GM12878 (cell line): ENCODE measurements at regions of chr14 and their contacts with region 1.

Region 1: DNA sequence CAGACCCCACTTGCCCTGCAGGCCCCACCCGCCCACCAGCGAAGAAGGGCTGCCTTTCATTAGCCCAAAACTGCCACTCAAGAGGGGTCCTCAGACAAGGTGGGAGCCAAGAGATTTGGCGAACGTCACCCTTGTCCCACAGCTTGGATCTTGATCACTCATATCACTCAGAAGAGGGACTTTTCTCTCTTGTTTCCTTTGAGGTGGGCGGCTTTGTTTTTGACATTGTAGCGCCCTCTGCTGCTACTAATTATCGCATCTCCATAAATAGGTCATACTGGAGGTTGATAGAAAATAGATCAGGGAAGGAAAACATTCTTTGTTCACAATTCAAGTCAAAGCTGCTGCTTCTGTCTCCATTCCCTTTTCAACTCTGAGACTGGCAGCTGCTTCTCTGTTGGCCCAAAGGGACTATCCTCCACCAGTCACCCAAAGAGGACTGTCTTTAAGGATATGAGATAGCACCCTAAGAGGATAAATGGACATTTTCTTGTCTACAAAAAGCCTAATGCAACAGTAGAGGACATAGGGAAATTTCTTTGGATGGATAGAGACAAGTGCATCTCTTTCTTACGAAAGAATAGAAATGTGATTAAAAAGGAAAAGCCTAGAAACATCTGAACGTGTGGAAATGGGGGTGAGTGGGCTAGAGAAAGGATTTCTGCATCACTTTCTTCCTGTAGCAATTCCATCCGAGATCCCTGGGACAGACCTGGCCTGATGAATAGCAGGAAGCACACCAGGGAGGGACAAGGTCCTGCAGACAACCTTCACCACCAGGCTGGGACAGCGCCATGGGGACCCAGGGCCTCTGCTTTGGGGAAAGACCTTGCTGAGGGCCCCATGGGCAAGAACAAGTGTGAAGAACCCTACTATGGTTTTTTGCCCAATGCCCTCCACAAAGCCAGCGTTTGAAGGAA is 115.8 kb downstream of the DAD1 start:
- DNase-seq: no peak
- ATAC-seq: peak; percentile 67
- H3K4me3 ChIP-seq: no peak overlapping the region
- H3K27ac ChIP-seq: peak overlapping the region; percentile 49
- H3K4me1 ChIP-seq: peaks cover 50% of the 10 kb centered on the region
- H3K27me3 ChIP-seq: no peaks in the 10 kb centered on the region
- CTCF ChIP-seq: peak; percentile 59 to 72 (median 72)
- EP300 ChIP-seq: no peak
- POLR2A ChIP-seq: no peak
- RAD21 ChIP-seq: peak; percentile 96

Region 2: GRCh38 chr14:22221508-22221907 is 251.7 kb before region 1 on chr14:
- CTCF ChIA-PET with region 1: interaction called, 11 read pairs
- POLR2A ChIA-PET with region 1: no interaction called
- RAD21 ChIA-PET with region 1: interaction called, 7 read pairs
- SMC1A ChIA-PET with region 1: interaction called, 10 read pairs
- in situ Hi-C with region 1: no loop called
- intact Hi-C with region 1: loop called (anchors 10 kb)
- DNase-seq: no peak
- ATAC-seq: peak; percentile 58
- H3K4me3 ChIP-seq: no peak overlapping the region
- H3K27ac ChIP-seq: no peak overlapping the region
- H3K4me1 ChIP-seq: no peaks in the 10 kb centered on the region
- H3K27me3 ChIP-seq: no peaks in the 10 kb centered on the region; a peak in 2 of 4 replicates
- CTCF ChIP-seq: peak; percentile 31 to 49 (median 43); a peak in 4 of 6 replicates
- EP300 ChIP-seq: no peak
- POLR2A ChIP-seq: no peak
- RAD21 ChIP-seq: peak; percentile 25; the same call in 1 of the 2 replicates

Region 3: GRCh38 chr14:22314181-22314820 is 158.9 kb before region 1 on chr14:
- CTCF ChIA-PET with region 1: interaction called, 165 read pairs
- POLR2A ChIA-PET with region 1: interaction called, 5 read pairs
- RAD21 ChIA-PET with region 1: interaction called, 59 read pairs
- SMC1A ChIA-PET with region 1: interaction called, 132 read pairs
- in situ Hi-C with region 1: loop called (anchors 5 kb)
- intact Hi-C with region 1: loop called (anchors 2 kb)
- DNase-seq: peak; percentile 48
- ATAC-seq: peak; percentile 98
- H3K4me3 ChIP-seq: no peak overlapping the region
- H3K27ac ChIP-seq: no peak overlapping the region
- H3K4me1 ChIP-seq: no peaks in the 10 kb centered on the region
- H3K27me3 ChIP-seq: no peaks in the 10 kb centered on the region
- CTCF ChIP-seq: peak; percentile 55 to 80 (median 69); a peak in 5 of 6 replicates
- EP300 ChIP-seq: no peak
- POLR2A ChIP-seq: no peak
- RAD21 ChIP-seq: peak; percentile 75

Region 4: DNA sequence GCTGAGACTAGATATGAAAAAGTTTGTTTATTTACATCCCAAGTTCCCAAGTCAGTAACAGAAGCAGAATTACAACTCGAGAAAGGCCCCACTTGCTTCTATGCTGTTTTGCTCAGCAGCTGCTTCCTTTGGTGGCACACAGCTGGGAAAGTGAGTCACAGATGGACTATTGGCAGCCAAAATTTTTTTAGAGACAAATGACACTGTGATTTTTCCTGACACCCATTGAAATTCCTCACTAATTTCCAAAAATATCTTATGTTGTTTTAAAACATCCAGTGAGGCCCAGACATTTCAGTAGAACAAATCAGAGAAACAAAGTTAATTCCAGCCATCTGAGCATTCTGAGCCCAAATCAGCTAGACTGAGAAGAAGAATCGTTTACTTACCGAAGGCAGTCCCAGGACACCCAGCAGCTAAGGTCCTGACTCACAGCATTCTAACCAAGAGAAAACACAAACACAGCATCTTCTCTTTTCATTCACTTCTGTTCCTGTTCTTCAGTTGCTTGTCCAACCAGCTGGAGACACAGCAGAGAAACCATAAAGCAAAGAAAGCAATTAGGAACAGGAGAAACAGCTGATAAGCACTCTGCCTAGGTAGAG is 72.4 kb before region 1 on chr14:
- CTCF ChIA-PET with region 1: interaction called, 411 read pairs
- POLR2A ChIA-PET with region 1: no interaction called
- RAD21 ChIA-PET with region 1: interaction called, 13 read pairs
- SMC1A ChIA-PET with region 1: interaction called, 912 read pairs
- in situ Hi-C with region 1: no loop called
- intact Hi-C with region 1: no loop called
- DNase-seq: no peak
- ATAC-seq: no peak
- H3K4me3 ChIP-seq: no peak overlapping the region
- H3K27ac ChIP-seq: no peak overlapping the region
- H3K4me1 ChIP-seq: no peaks in the 10 kb centered on the region
- H3K27me3 ChIP-seq: peaks cover 0 to 3% of the 10 kb centered on the region in 2 experiments; a peak in 2 of 4 replicates
- CTCF ChIP-seq: no peak
- EP300 ChIP-seq: no peak
- POLR2A ChIP-seq: no peak
- RAD21 ChIP-seq: no peak

Region 5: GRCh38 chr14:22448905-22449599 is 24.1 kb before region 1 on chr14:
- CTCF ChIA-PET with region 1: interaction called, 27 read pairs
- POLR2A ChIA-PET with region 1: no interaction called
- RAD21 ChIA-PET with region 1: interaction called, 9 read pairs
- SMC1A ChIA-PET with region 1: interaction called, 13 read pairs
- in situ Hi-C with region 1: no loop called
- intact Hi-C with region 1: no loop called
- DNase-seq: no peak
- ATAC-seq: peak; percentile 74
- H3K4me3 ChIP-seq: no peak overlapping the region
- H3K27ac ChIP-seq: peak overlapping the region; percentile 83
- H3K4me1 ChIP-seq: peaks cover 25% of the 10 kb centered on the region
- H3K27me3 ChIP-seq: no peaks in the 10 kb centered on the region
- CTCF ChIP-seq: no peak
- EP300 ChIP-seq: 0 out of 4 replicates have a peak, but pooled peaks of 1 of the 2 experiments have one; percentile 21
- POLR2A ChIP-seq: no peak
- RAD21 ChIP-seq: no peak

Region 6: DNA sequence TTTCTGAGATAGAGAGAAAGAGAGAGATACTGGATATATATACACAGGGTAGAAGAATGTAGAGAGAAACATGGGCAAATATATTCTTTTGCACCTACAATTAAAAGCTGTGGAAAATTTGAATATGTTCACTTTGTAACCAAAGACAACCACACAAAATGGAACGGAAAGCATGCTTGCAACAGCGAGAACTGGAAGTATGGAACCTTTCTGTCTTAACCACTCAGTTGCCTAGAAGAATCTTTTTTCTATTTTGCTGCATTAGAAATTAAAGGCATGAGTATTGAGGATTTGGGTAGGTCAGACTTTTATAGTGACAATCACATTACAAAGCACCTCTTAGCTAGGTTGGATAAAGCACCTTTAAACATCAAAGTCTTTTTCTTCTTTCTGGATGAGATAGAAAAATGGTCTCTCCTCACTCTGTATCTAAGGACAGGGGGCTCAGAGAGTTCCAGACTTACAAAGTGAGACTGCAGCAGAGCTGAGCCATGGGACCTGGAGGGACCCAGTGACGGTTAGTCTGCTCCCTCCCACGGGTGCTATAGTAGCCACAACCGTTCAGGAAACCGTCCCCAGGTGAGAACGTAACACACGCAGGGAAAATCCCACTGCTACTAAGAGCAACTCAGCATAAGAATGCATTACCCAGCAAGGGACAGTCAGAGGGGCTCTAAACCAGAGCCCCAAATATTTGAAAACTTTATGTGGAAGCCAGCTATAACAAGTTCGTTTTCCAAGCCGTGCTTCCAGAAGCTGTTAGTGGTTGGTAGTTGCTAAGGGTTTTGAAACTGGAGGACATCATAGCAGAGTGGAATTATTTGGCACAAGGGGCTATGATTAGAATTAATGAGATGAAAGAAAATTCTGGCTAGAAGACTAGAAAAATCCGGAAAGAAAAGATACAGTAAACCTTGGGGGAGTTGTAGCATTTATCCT is 18.8 kb after region 1 on chr14:
- CTCF ChIA-PET with region 1: interaction called, 171 read pairs
- POLR2A ChIA-PET with region 1: interaction called, 875 read pairs
- RAD21 ChIA-PET with region 1: interaction called, 797 read pairs
- SMC1A ChIA-PET with region 1: interaction called, 288 read pairs
- in situ Hi-C with region 1: no loop called
- intact Hi-C with region 1: no loop called
- DNase-seq: no peak
- ATAC-seq: peak; percentile 57
- H3K4me3 ChIP-seq: peak overlapping the region; percentile 45
- H3K27ac ChIP-seq: peak overlapping the region; percentile 98
- H3K4me1 ChIP-seq: peaks cover 86% of the 10 kb centered on the region
- H3K27me3 ChIP-seq: no peaks in the 10 kb centered on the region
- CTCF ChIP-seq: no peak
- EP300 ChIP-seq: peak; percentile 69 to 92; a peak in 3 of 4 replicates
- POLR2A ChIP-seq: peak; percentile 68
- RAD21 ChIP-seq: peak; percentile 26; the same call in 1 of the 2 replicates

Region 7: DNA sequence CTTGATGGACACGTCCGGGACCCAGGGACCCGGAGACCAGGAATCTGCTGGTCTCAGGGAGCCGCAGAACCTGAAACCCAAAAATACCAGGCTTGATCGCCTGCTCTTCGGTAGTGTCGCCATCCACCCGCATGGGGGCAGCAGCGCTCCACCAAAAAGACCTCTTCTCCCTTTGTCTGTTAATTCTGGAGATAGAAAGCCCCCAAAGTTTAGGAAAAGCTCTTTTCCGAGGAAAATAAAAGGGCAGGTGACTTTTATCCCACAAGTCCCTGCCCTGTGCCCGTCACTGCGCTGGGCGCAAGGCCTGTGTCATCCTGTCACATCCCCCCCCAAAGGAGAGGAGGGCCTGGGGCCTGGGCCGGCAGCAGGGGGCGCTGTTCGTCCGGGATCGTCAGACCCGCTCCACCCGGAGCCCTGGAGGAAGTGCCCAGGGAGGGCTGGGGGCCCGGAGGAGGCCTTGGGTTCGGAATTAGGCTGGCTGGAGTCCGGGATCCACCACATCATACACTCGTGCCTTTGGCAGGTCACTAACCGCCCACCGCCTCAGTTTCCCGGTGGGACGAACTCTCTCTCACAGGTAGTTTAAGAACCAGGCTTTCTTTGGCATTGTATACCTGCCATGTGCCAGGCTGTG is 83.9 kb after region 1 on chr14:
- CTCF ChIA-PET with region 1: interaction called, 236 read pairs
- POLR2A ChIA-PET with region 1: interaction called, 36 read pairs
- RAD21 ChIA-PET with region 1: interaction called, 50 read pairs
- SMC1A ChIA-PET with region 1: interaction called, 49 read pairs
- in situ Hi-C with region 1: no loop called
- intact Hi-C with region 1: loop called (anchors 2 kb)
- DNase-seq: no peak
- ATAC-seq: peak; percentile 58
- H3K4me3 ChIP-seq: peak overlapping the region; percentile 51; the same call in 1 of the 2 replicates
- H3K27ac ChIP-seq: peak overlapping the region; percentile 100
- H3K4me1 ChIP-seq: peaks cover 73% of the 10 kb centered on the region
- H3K27me3 ChIP-seq: no peaks in the 10 kb centered on the region
- CTCF ChIP-seq: peak; percentile 66 to 93 (median 86)
- EP300 ChIP-seq: no peak
- POLR2A ChIP-seq: peak; percentile 5; the same call in 1 of the 2 replicates
- RAD21 ChIP-seq: peak; percentile 74